Activated CD4-positive, alpha-beta memory T cell treated with anti-CD3 and anti-CD28 coated beads for 36 hours (primary cell): ENCODE measurements at regions of chr1 and their contacts with region 1.

Region 1: DNA sequence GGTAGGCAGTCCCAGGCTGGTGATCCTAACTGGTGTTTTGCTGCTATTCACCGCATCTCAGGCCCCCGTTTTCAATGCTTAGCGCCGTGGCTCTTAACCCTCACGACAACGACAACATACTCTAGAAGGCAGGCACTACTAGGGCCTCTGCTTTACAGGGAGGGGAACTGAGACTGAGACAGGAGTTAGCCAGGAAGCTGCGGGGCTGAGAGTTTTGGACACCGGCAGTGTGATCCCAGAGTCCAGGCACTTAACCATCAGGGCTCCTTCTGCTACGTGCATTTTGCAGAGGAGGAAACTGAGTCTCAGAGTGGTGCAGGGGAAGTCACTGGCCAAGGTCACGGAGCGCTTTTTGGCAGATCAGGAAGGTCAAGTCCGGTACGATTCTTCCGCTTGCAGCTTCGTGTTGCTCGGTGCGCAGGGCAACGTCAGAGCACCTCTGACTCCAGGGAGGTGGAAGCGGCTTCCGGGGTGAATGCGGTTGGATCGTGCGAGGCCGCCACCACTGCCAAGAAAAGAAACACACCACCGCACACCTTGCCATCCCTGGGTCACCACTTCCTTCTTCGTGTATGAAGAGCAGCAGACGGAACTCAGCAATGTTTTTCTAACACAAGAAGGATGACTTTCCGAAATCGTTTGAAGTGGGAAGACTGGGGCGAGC is 300.3 kb downstream of the RRAGC start:
- DNase-seq: peak; percentile 93
- H3K4me3 Mint-ChIP-seq: peak overlapping the region; percentile 66
- H3K27ac Mint-ChIP-seq: peak overlapping the region; percentile 77
- H3K4me1 Mint-ChIP-seq: peaks cover 47% of the 10 kb centered on the region
- H3K27me3 Mint-ChIP-seq: peaks cover 17% of the 10 kb centered on the region

Region 2: DNA sequence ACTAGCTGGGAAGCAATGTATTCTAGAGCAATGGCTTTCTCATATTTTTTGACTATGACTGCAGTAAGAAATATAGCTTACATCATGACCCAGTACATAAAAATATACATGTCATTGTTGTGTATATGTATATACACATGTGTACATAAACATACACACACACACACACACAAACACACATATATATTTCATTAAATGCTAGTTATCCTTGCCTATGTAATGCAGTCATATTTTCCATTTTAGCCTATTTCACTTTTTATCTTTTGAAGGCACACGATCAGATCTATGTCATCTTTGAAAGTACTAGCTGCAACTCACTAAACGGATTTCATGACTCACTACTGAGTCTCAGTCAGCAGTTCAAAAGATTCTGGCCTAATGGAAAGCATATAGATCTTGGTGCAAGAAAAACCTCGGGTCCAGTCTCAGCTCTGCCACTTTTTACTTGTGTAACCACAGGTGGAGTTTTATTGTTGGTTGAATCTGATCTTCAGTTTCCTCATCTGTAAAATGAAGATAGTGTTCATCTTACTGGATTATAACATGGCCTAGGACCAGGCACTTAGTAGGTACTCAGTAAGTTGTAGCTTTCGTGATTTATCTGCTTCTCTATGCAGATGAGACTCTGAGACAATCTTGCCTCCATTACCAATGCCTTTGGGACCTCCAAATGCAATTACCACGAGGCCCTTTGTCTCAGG is 25.4 kb before region 1 on chr1:
- CTCF ChIA-PET with region 1: no interaction called
- POLR2A ChIA-PET with region 1: no interaction called
- intact Hi-C with region 1: loop called (anchors 2 kb)
- DNase-seq: peak; percentile 31
- H3K4me3 Mint-ChIP-seq: no peak overlapping the region
- H3K27ac Mint-ChIP-seq: peak overlapping the region; percentile 49
- H3K4me1 Mint-ChIP-seq: peaks cover 13% of the 10 kb centered on the region
- H3K27me3 Mint-ChIP-seq: peaks cover 2% of the 10 kb centered on the region

Region 3: GRCh38 chr1:38546636-38547035 is 12.7 kb before region 1 on chr1:
- CTCF ChIA-PET with region 1: no interaction called
- POLR2A ChIA-PET with region 1: no interaction called
- intact Hi-C with region 1: no loop called
- DNase-seq: no peak
- H3K4me3 Mint-ChIP-seq: no peak overlapping the region
- H3K27ac Mint-ChIP-seq: no peak overlapping the region
- H3K4me1 Mint-ChIP-seq: no peaks in the 10 kb centered on the region
- H3K27me3 Mint-ChIP-seq: no peaks in the 10 kb centered on the region